ENCODE measurements at regions of chr16 and their contacts with region 1.

Region 1: DNA sequence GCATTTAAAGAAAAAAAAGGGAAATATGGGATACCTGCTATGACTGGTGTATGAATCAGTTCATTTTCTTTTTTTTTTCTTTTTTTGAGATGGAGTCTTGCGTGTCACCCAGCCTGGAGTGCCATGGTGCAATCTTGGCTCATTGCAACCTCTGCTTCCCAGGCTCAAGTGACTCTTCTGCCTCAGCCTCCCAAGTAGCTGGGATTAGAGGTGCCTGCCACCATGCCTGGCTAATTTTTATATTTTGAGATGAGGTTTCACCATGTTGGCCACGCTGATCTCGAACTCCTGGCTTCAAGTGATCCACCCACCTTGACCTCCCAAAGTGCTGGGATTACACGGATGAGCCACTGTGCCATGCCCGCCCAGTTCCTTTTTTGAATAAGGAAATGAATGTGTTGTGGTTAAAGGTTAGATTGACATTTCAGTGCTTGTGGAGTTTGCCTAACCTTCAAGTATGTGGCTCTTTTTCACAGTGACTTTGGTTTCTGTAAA is 7.7 kb downstream of the HAPSTR1 start:
- DNase-seq: no peak
- ATAC-seq: peak; percentile 59
- H3K4me3 ChIP-seq: peak overlapping the region; percentile 48; the same call in 1 of the 2 replicates
- H3K27ac ChIP-seq: peak overlapping the region; percentile 15
- H3K4me1 ChIP-seq: peaks cover 18% of the 10 kb centered on the region
- H3K27me3 ChIP-seq: no peaks in the 10 kb centered on the region
- CTCF ChIP-seq: no peak
- EP300 ChIP-seq: no peak
- POLR2A ChIP-seq: no peak
- RAD21 ChIP-seq: no peak

Region 2: GRCh38 chr16:8776129-8776584 is 323.0 kb before region 1 on chr16:
- CTCF ChIA-PET with region 1: no interaction called
- POLR2A ChIA-PET with region 1: no interaction called
- RAD21 ChIA-PET with region 1: no interaction called
- SMC1A ChIA-PET with region 1: no interaction called
- in situ Hi-C with region 1: no loop called
- intact Hi-C with region 1: no loop called
- DNase-seq: no peak
- ATAC-seq: no peak
- H3K4me3 ChIP-seq: no peak overlapping the region
- H3K27ac ChIP-seq: no peak overlapping the region
- H3K4me1 ChIP-seq: no peaks in the 10 kb centered on the region
- H3K27me3 ChIP-seq: no peaks in the 10 kb centered on the region
- CTCF ChIP-seq: no peak
- EP300 ChIP-seq: no peak
- POLR2A ChIP-seq: no peak
- RAD21 ChIP-seq: no peak

Region 3: DNA sequence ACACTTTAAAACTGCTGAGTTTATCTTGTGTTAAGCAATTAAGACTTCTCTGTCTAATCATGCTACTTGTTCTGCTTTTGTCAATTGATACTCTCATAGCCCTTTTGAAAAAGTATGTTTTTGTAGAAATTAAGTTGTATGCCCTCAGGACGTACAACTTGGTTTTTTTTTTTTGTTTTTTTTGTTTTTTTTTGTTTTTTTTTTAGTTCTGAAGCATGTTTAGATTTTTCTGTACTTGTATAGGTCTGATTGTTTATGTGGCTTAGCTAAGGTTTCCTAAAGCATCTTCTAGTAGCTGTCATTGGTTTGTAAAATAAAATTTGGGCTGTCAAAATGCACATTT is 13.6 kb after region 1 on chr16:
- CTCF ChIA-PET with region 1: interaction called, 5 read pairs
- POLR2A ChIA-PET with region 1: interaction called, 10 read pairs
- RAD21 ChIA-PET with region 1: interaction called, 3 read pairs
- SMC1A ChIA-PET with region 1: interaction called, 14 read pairs
- in situ Hi-C with region 1: no loop called
- intact Hi-C with region 1: no loop called
- DNase-seq: no peak
- ATAC-seq: no peak
- H3K4me3 ChIP-seq: no peak overlapping the region
- H3K27ac ChIP-seq: no peak overlapping the region
- H3K4me1 ChIP-seq: peaks cover 3% of the 10 kb centered on the region; the same call in 1 of the 2 replicates
- H3K27me3 ChIP-seq: no peaks in the 10 kb centered on the region
- CTCF ChIP-seq: no peak
- EP300 ChIP-seq: no peak
- POLR2A ChIP-seq: no peak
- RAD21 ChIP-seq: no peak

Region 4: DNA sequence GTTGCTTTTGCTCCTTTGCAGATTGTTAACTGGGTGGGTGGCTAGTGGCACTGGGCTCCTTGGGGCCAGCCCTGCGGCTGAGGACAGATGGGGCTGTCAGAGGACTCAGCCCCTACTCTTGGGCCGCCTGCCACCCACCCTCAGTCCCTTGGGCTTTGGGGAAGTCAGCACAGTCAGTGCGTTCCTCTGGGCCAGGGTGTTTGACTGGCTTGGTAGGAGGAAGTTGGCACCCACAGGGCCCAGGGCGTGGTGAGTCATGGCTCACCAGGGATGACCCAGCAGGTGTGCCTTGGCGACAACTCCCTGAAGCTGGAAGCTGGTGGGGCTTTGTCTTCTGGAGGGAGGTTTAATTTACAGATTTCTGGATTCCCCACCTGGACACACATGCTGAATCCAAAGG is 24.7 kb after region 1 on chr16:
- CTCF ChIA-PET with region 1: interaction called, 3 read pairs
- POLR2A ChIA-PET with region 1: interaction called, 3 read pairs
- RAD21 ChIA-PET with region 1: interaction called, 3 read pairs
- SMC1A ChIA-PET with region 1: interaction called, 44 read pairs
- in situ Hi-C with region 1: no loop called
- intact Hi-C with region 1: no loop called
- DNase-seq: no peak
- ATAC-seq: peak; percentile 54
- H3K4me3 ChIP-seq: no peak overlapping the region
- H3K27ac ChIP-seq: no peak overlapping the region
- H3K4me1 ChIP-seq: peaks cover 32% of the 10 kb centered on the region
- H3K27me3 ChIP-seq: no peaks in the 10 kb centered on the region
- CTCF ChIP-seq: no peak
- EP300 ChIP-seq: no peak
- POLR2A ChIP-seq: no peak
- RAD21 ChIP-seq: no peak